ENCODE measurements at regions of chr13 and their contacts with region 1.

Region 1: GRCh38 chr13:100674848-100675660 is 459 bp upstream of the TMTC4 start:
- DNase-seq: peak; percentile 99
- ATAC-seq: peak; percentile 96
- H3K4me3 Mint-ChIP-seq: peak overlapping the region; percentile 77
- H3K27ac Mint-ChIP-seq: peak overlapping the region; percentile 83
- H3K4me1 Mint-ChIP-seq: peaks cover 23% of the 10 kb centered on the region
- H3K27me3 Mint-ChIP-seq: peaks cover 7% of the 10 kb centered on the region

Region 2: GRCh38 chr13:100588331-100589177 is 86.5 kb before region 1 on chr13 and contains the start of gene GGACT:
- CTCF ChIA-PET with region 1: interaction called, 4 read pairs
- POLR2A ChIA-PET with region 1: no interaction called
- intact Hi-C with region 1: loop called (anchors 1 to 5 kb)
- DNase-seq: peak; percentile 90
- ATAC-seq: peak; percentile 94
- H3K4me3 Mint-ChIP-seq: peak within 1 kb of the TSS; percentile 75
- H3K27ac Mint-ChIP-seq: peak within 1 kb of the TSS; percentile 86
- H3K4me1 Mint-ChIP-seq: peaks cover 37% of the 10 kb centered on the region
- H3K27me3 Mint-ChIP-seq: no peaks in the 10 kb centered on the region
- total RNA-seq, gene GGACT: 6.8 to 7.0 TPM

Measured in activated CD4-positive, alpha-beta T cell treated with anti-CD3 and anti-CD28 coated beads for 36 hours (primary cell).